Caco-2 (cell line): ENCODE measurements at regions of chr3 and their contacts with region 1.

Region 1: DNA sequence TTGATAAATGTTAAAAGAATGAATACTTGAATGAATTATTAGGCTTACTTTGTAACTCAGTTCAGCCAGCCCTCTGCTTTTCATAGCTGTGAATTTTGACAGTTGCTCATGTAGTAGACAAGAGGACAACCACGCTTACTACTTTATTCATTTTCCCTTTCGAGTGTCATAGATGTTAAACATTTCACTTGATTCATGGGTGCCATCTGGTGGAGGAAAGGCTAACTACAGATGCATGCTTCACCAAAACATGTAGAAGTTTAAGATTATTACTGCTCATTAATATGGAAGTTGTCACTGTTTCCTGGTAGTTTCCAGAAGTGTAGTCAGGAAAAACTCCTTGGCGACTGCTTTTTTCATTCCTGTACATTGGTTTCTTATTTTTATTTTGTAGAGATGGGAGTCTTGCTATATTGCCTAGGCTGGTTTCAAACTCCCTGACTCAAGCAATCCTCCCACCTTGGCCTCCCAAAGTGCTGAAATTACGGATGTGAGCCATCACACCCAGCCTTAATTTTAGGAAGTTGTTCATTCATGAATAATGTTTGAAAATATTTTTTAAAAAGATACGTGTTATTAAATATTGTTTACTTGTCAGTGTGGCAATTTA is 163.2 kb downstream of the B3GALNT1 start:
- DNase-seq: peak; percentile 51 to 69
- H3K4me3 ChIP-seq: no peak overlapping the region
- H3K4me3 Mint-ChIP-seq: no peak overlapping the region
- H3K27ac Mint-ChIP-seq: no peak overlapping the region
- H3K4me1 ChIP-seq: no peaks in the 10 kb centered on the region
- H3K4me1 Mint-ChIP-seq: no peaks in the 10 kb centered on the region
- H3K27me3 ChIP-seq: no peaks in the 10 kb centered on the region
- H3K27me3 Mint-ChIP-seq: no peaks in the 10 kb centered on the region
- CTCF ChIP-seq: peak; percentile 60 to 74

Region 2: GRCh38 chr3:160686955-160687535 is 254.9 kb before region 1 on chr3:
- CTCF ChIA-PET with region 1: no interaction called
- POLR2A ChIA-PET with region 1: no interaction called
- intact Hi-C with region 1: loop called (anchors 1 kb)
- DNase-seq: no peak
- H3K4me3 ChIP-seq: no peak overlapping the region
- H3K4me3 Mint-ChIP-seq: no peak overlapping the region
- H3K27ac Mint-ChIP-seq: no peak overlapping the region
- H3K4me1 ChIP-seq: peaks cover 9% of the 10 kb centered on the region; the same call in 1 of the 2 replicates
- H3K4me1 Mint-ChIP-seq: peaks cover 7% of the 10 kb centered on the region
- H3K27me3 ChIP-seq: no peaks in the 10 kb centered on the region
- H3K27me3 Mint-ChIP-seq: no peaks in the 10 kb centered on the region
- CTCF ChIP-seq: peak; percentile 38 to 39

Region 3: GRCh38 chr3:160707187-160707794 is 234.7 kb before region 1 on chr3:
- CTCF ChIA-PET with region 1: no interaction called
- POLR2A ChIA-PET with region 1: no interaction called
- intact Hi-C with region 1: loop called (anchors 1 kb)
- DNase-seq: peak in 1 of 2 experiments; percentile 40
- H3K4me3 ChIP-seq: no peak overlapping the region
- H3K4me3 Mint-ChIP-seq: no peak overlapping the region
- H3K27ac Mint-ChIP-seq: no peak overlapping the region
- H3K4me1 ChIP-seq: no peaks in the 10 kb centered on the region
- H3K4me1 Mint-ChIP-seq: no peaks in the 10 kb centered on the region
- H3K27me3 ChIP-seq: no peaks in the 10 kb centered on the region
- H3K27me3 Mint-ChIP-seq: peaks cover 15% of the 10 kb centered on the region
- CTCF ChIP-seq: peak; percentile 47

Region 4: DNA sequence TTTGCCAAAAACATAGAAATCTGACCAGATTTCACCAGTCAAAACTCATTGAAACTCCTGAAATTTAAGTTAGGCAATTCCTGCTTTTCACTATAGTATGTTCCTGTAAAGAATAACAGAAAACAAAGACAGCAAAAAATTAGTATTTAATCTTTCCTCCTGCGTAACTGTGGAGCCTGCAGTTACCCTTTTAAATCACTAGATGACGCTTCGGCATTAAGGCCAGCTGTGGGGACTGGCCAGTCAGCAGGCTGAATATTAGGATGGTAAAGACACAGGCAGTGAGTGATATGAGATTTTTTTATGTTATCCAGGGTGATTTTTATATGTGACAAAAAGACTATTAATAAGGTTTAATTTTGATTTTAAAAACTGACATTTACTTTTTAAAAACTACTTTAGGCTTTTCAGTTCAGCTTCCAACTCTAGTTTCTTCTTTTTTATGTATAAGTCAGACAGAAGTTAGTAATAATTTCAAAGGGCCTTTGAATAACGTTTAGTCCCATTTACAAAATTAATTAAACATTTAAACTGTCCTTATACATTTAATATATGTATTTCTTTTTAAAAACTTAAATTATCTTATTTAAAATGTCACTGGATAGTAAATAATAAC is 20.9 kb before region 1 on chr3:
- CTCF ChIA-PET with region 1: no interaction called
- POLR2A ChIA-PET with region 1: no interaction called
- intact Hi-C with region 1: loop called (anchors 1 kb)
- DNase-seq: peak in 1 of 2 experiments; percentile 41
- H3K4me3 ChIP-seq: no peak overlapping the region
- H3K4me3 Mint-ChIP-seq: no peak overlapping the region
- H3K27ac Mint-ChIP-seq: no peak overlapping the region
- H3K4me1 ChIP-seq: no peaks in the 10 kb centered on the region
- H3K4me1 Mint-ChIP-seq: no peaks in the 10 kb centered on the region
- H3K27me3 ChIP-seq: no peaks in the 10 kb centered on the region
- H3K27me3 Mint-ChIP-seq: peaks cover 14% of the 10 kb centered on the region
- CTCF ChIP-seq: peak; percentile 80 to 89

Region 5: DNA sequence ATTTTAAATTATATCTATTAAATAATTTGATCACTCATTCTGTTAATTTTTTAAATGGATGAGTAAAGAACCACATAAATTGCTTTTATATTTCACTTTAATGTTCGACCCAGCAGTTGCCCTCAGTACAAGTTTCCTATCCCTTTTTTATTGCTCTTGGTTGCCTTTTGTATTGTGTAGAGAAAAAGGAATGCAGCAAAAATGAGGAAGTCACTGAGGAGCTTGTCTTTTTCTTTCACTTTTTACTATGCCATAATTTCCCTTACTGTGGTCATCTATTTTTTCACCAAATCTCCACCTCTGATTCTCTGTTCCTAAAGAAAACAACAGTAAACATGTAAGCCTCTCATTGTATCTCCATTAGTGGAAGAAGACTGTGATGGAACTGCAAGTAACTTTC is 40.5 kb after region 1 on chr3:
- CTCF ChIA-PET with region 1: no interaction called
- POLR2A ChIA-PET with region 1: no interaction called
- intact Hi-C with region 1: no loop called
- DNase-seq: no peak
- H3K4me3 ChIP-seq: no peak overlapping the region
- H3K4me3 Mint-ChIP-seq: no peak overlapping the region
- H3K27ac Mint-ChIP-seq: no peak overlapping the region
- H3K4me1 ChIP-seq: no peaks in the 10 kb centered on the region
- H3K4me1 Mint-ChIP-seq: no peaks in the 10 kb centered on the region
- H3K27me3 ChIP-seq: no peaks in the 10 kb centered on the region
- H3K27me3 Mint-ChIP-seq: no peaks in the 10 kb centered on the region
- CTCF ChIP-seq: no peak